GM10248 (cell line): ENCODE measurements at regions of chr9 and their contacts with region 1.

Region 1: DNA sequence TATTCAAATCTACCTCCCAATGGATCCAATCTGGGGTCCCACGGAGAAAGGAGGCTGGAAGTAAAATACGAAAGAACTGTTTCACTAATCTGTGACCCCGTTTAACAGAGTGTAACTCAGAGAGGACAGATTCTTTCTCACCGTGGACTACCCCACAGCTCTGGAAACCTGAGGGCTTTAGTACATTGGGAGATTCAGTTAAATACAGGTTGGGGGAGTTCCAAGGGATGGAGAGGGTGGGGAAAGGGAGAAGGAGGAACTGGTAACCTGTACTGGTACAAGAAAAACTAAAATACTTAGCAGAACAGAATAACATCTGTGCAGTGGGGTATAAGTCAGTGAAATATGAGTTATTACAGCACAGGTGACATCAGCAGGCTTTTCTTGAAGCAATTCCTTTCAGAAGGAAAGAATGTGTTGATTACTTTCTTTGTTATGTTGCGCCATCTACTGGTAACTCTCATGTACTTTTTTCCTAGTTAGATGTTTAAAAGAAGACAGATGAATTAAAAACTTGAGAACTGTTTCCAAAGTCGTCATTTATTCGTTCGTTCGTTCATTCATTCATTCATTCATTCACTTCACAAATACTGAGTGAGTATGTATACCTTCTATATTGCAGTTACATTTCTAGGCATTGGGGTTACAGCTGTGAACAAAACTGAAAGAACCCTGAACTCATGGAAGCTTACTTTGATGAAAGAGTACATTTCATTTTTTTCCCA is 30.0 kb upstream of the STOM start:
- DNase-seq: peak; percentile 26
- CTCF ChIP-seq: peak; percentile 43

Region 2: DNA sequence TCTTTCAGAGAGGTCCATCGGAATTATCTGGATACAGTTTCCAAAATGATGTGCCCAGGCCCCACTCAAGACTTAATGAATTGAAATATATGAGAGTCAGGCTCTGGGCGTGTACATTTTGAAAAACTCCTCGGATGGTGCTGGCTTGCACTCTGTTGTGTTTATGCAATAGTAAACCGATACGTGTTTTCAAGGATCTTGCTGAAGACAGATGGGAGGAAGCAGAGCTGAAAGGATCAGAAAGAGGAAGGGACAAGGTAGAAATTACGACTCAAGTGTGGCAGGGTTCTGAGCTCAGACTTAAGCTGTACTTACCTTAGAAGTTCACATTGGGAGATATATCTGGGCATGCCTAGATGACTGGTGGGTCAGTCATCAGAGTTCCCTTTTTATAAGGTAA is 16.3 kb before region 1 on chr9:
- CTCF ChIA-PET with region 1: interaction called, 16 read pairs
- POLR2A ChIA-PET with region 1: no interaction called
- DNase-seq: no peak
- CTCF ChIP-seq: no peak